H1 (cell line): ENCODE measurements at regions of chr22 and their contacts with region 1.

Region 1: DNA sequence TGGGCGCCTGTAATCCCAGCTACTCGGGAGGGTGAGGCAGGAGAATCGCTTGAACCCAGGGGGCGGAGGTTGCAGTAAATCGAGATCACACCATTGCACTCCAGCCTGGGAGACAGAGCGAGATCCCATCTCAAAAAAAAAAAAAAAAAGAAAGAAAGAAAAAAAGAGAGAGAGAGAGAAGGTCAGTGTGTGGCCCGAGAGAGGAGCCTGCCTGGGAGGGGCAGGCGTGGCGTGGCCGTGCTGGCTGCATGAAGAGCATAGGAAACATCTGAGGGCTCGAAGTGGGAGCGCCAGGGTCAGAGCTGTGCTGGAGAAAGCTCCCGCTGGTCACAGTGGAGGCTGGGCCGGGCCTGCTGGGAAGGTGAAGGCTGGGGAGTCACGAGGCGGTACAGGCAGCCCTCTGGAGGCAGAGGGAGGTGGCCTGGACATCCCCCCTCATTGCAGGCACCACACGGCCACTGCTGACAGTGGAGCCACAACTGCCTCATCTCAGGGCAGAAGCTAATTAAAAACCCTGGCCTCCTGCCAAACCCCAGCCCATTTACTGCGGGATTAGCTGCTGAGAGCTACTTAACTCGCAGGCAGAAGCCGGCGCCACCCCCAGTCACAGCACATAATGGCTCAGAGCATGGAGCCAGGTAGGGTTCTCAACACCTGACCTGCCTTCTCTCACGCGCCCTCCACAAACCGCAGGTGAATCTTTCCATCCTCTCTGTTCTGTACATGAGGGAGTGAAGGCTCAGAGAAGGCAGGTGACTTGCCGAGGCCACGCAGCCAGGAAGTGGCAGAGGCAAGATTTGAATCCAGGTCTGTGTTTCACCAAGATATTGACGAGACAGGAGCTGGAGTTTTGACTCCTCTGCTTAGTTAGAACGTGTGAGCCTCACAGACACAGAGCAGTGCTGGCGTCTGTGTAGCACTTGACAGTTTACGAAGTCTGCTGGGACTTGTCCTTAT is 32.6 kb downstream of the NFAM1 start:
- DNase-seq: no peak
- H3K4me3 ChIP-seq: no peak overlapping the region
- H3K27ac ChIP-seq: no peak overlapping the region
- H3K4me1 ChIP-seq: peaks cover 0 to 13% (median 5%) of the 10 kb centered on the region in 4 experiments; a peak in 4 of 7 replicates
- H3K27me3 ChIP-seq: no peaks in the 10 kb centered on the region
- CTCF ChIP-seq: no peak
- EP300 ChIP-seq: no peak
- POLR2A ChIP-seq: no peak
- RAD21 ChIP-seq: peak in 1 of 2 experiments; percentile 4; a peak in 1 of 4 replicates

Region 2: GRCh38 chr22:42419243-42419881 is 19.8 kb after region 1 on chr22:
- CTCF ChIA-PET with region 1: interaction called, 14 read pairs
- POLR2A ChIA-PET with region 1: interaction called, 3 read pairs
- DNase-seq: no peak
- H3K4me3 ChIP-seq: no peak overlapping the region
- H3K27ac ChIP-seq: no peak overlapping the region
- H3K4me1 ChIP-seq: peaks cover 0 to 6% (median under 1%) of the 10 kb centered on the region in 4 experiments; a peak in 4 of 7 replicates
- H3K27me3 ChIP-seq: no peaks in the 10 kb centered on the region
- CTCF ChIP-seq: no peak
- EP300 ChIP-seq: no peak
- POLR2A ChIP-seq: no peak
- RAD21 ChIP-seq: no peak

Region 3: DNA sequence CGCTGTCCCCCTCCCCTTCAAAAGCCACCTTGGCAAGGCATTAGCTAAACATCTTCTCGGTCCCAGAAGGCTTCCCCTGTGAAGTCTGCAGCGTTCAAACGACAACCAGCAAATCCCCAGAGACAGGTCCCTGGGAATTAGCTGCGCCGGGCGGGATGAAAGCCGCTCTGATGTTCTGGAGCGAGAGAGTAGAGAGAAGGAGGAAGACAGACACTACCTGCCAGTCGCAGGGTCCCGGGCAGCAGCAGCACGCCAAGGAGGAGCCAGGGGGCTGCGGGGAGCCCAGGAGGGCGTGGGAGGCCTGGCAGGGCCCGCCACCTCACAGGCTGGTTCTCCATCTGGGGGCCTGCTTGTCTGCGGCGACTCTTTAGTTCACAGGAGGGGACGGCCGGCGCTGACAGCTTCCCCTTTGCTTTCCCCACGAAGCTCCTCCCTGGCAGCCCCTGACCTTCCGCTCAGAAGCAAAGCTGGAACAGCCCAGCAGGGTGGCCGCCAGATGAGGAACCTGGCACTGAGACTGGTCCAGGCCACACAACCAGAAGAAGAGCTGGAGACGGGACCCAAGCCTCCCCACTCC is 32.5 kb after region 1 on chr22 and contains the start of gene NFAM1:
- CTCF ChIA-PET with region 1: interaction called, 11 read pairs
- POLR2A ChIA-PET with region 1: interaction called, 3 read pairs
- DNase-seq: no peak
- H3K4me3 ChIP-seq: peak within 1 kb of the TSS in 1 of 4 experiments; percentile 37; a peak in 1 of 8 replicates
- H3K27ac ChIP-seq: no peak within 1 kb of the TSS
- H3K4me1 ChIP-seq: peaks cover 6 to 18% (median 15%) of the 10 kb centered on the region in 4 experiments
- H3K27me3 ChIP-seq: peaks cover 0 to 5% (median 3%) of the 10 kb centered on the region in 4 experiments; a peak in 3 of 7 replicates
- CTCF ChIP-seq: no peak
- EP300 ChIP-seq: no peak
- POLR2A ChIP-seq: no peak
- RAD21 ChIP-seq: no peak
- total RNA-seq, gene NFAM1: 0.61 and 0.73 TPM in 2 replicates